ENCODE measurements at regions of chr11 and their contacts with region 1.

Region 1: DNA sequence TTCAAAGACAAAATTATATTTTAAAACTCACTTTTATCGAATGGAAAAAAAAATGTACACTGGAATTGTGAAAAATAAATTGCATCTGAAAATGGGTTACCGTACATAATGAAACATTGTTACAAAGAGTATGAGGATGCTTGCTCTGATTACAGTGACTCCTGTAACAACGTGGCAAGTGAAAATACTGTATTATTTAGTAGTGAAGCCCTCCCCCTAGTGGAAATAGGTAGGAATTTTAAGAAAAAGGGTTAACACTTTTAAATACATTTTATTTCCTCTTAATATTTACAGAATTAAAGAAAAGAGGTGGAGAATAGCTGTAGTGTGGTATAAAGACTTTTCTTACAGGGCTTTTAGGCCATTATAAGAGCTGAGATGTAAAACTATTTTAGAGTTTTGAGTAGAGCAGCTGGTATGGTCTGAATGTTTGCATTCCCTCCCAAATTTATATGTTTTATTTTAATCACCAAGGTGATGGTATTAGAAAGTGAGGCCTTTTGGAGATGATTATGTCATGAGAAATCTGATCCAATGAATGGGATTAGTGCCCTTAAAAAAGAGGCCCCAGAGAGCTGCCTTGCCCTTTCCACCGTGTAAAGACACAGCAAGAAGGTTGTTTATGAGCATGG is 25.2 kb downstream of the FAM76B start:
- DNase-seq: no peak
- H3K4me3 ChIP-seq: no peak overlapping the region
- H3K27ac ChIP-seq: no peak overlapping the region
- H3K27me3 ChIP-seq: no peaks in the 10 kb centered on the region
- CTCF ChIP-seq: peak; percentile 41

Region 2: GRCh38 chr11:95150946-95151684 is 613.3 kb before region 1 on chr11:
- in situ Hi-C with region 1: loop called (anchors 25 kb)
- DNase-seq: peak; percentile 87
- H3K4me3 ChIP-seq: peak overlapping the region; percentile 70
- H3K27ac ChIP-seq: peak overlapping the region; percentile 14
- H3K27me3 ChIP-seq: no peaks in the 10 kb centered on the region
- CTCF ChIP-seq: peak; percentile 85

Measured in brain microvascular endothelial cell (primary cell).